ENCODE measurements at regions of chr5 and their contacts with region 1.

Region 1: DNA sequence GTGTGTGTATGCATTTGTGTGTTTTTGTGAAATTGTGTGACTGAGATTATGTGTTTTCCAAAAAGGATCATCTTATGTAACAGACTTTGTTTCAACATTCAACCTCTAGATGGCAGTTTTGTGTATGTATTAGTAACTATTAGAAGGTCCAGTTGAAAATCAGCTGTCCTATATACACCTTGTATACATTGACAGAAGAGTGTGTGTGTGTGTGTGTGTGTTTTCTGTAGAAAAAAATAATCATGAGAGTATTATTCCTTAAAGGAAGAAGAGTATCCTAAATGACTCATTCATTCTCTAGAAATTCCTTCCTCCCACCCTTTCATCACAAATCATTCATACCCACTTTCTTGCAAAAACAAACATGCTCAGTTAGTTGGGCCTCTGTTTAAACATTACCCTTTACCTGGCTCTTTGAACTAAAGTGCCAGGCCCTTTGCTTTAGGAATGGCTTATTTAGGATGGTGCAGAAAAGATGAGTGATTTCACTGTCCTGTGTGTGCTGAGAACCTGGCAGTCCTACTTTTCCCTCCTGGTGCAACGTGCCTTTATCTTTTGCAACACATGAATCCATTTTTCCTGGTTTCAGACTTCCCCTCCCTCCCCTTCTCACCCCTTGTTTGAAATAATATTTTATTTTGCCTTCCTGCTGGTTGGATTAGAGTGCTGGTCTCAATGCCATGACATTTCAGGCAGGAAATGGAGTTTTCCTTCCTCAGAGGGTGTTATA is 152.2 kb downstream of the ARHGAP26 start:
- DNase-seq: no peak
- ATAC-seq: peak; percentile 65

Region 2: DNA sequence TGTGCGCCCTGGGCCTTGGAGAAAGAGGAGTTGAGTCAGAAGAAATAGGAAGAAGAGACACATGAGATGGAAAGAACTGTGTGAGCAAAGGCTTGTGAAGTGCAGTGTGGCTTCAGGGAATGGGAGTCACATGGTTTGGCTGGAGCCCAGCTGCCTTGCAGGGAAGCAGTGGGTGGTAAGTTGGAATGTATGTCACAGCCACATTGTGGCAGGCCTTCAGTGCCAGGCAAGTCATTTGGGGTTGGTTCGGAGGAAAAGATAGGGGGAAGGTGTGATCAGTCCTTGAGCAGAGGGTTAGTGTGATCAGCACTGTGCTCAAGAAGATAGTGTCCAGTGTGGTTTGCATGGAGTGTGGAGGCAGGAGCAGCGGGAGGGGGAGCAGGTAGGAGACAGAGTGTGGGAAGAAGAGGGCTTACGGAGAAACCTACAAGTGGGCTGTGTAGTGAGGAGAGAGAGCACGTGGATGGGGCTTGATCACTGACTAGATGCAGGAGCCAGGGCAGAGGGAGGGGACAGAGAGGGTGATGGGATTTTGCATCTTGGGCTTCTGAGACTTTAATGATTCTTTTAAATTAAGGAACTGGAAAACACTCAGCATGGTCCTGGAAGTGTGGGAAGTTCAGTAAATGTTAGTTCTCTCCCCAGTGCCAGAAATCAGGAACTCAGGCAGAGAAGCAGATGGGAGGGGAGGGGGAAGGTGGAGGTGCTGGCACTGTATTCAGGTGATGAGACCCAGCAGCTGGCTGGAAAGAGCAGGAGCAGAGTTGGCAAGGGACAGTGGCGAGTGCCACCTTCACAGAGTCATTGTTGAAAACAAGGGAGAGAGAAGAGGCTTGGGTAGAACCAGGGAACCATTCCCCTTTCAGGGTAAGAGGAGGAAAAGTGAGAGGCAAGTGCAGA is 105.6 kb before region 1 on chr5:
- intact Hi-C with region 1: no loop called
- DNase-seq: peak; percentile 80
- ATAC-seq: peak; percentile 23

Region 3: DNA sequence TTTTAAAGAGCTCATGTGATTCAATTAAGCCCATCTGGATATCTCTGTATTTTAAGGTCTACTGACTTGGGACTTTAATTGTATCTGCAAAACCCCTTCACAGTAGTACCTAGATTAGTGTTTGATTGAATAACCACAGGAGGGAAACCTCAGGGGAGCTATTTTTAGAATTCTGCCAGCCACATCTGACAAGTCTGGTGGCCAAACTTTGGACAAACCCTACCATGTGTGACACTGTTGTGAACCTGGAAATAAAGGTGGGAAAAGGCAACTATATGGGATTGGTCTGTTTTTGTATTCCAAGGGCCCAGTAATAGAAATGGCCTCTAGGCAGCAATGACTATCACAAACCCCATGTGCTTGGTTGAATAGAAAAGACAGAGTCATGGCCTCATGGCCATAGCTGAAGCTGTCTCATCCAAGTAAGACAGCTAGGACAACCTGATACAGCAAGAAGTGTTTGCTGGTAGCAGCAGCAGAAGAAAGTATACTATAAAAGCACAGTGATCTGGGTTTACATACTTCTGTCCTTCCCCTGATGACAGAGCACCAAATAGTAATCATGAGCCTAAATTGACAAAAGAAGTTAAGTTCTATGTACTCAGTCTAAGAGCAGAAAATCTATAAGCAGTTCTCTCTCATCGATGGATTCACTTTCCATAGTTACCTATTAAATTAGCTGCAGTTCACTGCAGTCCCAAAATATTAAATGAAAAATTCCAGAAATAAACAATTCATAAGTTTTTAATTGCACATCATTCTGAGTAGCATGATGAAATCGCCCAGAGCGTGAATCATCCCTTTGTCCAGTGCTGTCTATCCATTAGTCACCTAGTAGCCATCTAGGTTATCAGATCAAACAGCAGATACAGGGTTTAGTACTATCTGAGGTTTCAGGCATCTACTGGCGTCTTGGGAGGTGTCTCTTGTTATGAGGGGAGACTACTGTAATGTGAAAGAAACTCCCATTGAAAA is 37.6 kb after region 1 on chr5:
- intact Hi-C with region 1: loop called (anchors 5 kb)
- DNase-seq: no peak
- ATAC-seq: peak; percentile 26

Region 4: DNA sequence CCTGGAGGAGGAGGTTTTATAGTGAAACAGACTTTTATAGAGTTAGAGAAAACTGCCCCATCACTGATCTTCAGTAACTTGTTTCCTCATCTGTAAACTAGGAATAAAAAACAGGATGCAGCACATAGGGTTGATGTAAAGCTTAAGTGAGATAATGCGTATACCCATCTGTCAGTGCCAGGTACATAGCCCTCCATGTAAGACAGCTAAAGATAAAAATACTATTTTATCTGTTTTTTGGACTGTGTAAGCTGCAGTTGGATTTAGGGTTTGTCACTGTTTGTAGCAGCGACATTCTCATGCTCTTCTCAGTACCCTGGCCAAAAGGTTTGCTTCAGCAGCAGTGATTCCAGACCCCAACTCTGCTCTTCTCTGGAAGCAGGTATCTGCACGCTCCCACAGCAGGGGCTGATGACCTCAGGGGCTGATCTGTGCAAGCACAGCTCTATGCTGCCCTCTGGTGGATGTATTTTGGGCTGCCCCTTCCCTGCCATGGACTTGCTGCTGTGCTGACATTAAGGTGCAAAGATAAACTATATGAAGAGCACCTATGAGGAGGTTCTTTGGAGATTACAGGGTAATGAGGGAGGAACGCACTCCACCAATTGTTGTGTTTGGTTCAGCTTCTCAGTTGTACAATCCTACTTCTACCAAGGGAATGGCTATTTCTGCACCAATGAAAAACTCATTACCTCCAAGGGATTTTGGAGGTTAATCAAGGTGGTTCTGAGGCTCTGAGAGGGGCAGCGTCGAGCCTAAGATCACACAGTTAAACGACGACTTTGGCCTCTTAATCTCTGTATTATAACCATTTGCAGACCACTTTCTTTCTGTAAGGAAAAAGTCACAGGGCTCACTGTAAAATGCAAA is 902.7 kb after region 1 on chr5:
- intact Hi-C with region 1: loop called (anchors 10 kb)
- DNase-seq: peak; percentile 86
- ATAC-seq: peak; percentile 98

Measured in Right ventricle myocardium superior (tissue), 1 donor.